CD8-positive, alpha-beta T cell (primary cell): ENCODE measurements at regions of chr2 and their contacts with region 1.

Region 1: GRCh38 chr2:24971536-24972314 is at the start of gene DNAJC27:
- DNase-seq: peak; percentile 92 to 99 (median 98)
- ATAC-seq: peak; percentile 87
- H3K4me3 ChIP-seq: peak within 1 kb of the TSS; percentile 68 to 98
- H3K4me3 Mint-ChIP-seq: peak within 1 kb of the TSS; percentile 96
- H3K27ac ChIP-seq: peak within 1 kb of the TSS; percentile 93 to 100
- H3K27ac Mint-ChIP-seq: peak within 1 kb of the TSS; percentile 100
- H3K4me1 ChIP-seq: peaks cover 17% of the 10 kb centered on the region
- H3K4me1 Mint-ChIP-seq: peaks cover 27% of the 10 kb centered on the region
- H3K27me3 ChIP-seq: no peaks in the 10 kb centered on the region
- H3K27me3 Mint-ChIP-seq: no peaks in the 10 kb centered on the region
- CTCF ChIP-seq: no peak
- total RNA-seq, gene DNAJC27: 18.9 to 19.1 TPM

Region 2: GRCh38 chr2:23926750-23927571 is 1044.8 kb before region 1 on chr2 and contains the start of gene ATAD2B:
- CTCF ChIA-PET with region 1: no interaction called
- POLR2A ChIA-PET with region 1: no interaction called
- intact Hi-C with region 1: loop called in 1 of 2 experiments (anchors 5 kb)
- DNase-seq: peak; percentile 86 to 98 (median 92)
- ATAC-seq: peak; percentile 82
- H3K4me3 ChIP-seq: peak within 1 kb of the TSS; percentile 84 to 95
- H3K4me3 Mint-ChIP-seq: peak within 1 kb of the TSS; percentile 99
- H3K27ac ChIP-seq: peak within 1 kb of the TSS; percentile 95 to 99
- H3K27ac Mint-ChIP-seq: peak within 1 kb of the TSS; percentile 100
- H3K4me1 ChIP-seq: peaks cover 33% of the 10 kb centered on the region
- H3K4me1 Mint-ChIP-seq: peaks cover 52% of the 10 kb centered on the region
- H3K27me3 ChIP-seq: no peaks in the 10 kb centered on the region
- H3K27me3 Mint-ChIP-seq: no peaks in the 10 kb centered on the region
- CTCF ChIP-seq: peak; percentile 52
- total RNA-seq, gene ATAD2B: 32.0 to 32.4 TPM

Region 3: DNA sequence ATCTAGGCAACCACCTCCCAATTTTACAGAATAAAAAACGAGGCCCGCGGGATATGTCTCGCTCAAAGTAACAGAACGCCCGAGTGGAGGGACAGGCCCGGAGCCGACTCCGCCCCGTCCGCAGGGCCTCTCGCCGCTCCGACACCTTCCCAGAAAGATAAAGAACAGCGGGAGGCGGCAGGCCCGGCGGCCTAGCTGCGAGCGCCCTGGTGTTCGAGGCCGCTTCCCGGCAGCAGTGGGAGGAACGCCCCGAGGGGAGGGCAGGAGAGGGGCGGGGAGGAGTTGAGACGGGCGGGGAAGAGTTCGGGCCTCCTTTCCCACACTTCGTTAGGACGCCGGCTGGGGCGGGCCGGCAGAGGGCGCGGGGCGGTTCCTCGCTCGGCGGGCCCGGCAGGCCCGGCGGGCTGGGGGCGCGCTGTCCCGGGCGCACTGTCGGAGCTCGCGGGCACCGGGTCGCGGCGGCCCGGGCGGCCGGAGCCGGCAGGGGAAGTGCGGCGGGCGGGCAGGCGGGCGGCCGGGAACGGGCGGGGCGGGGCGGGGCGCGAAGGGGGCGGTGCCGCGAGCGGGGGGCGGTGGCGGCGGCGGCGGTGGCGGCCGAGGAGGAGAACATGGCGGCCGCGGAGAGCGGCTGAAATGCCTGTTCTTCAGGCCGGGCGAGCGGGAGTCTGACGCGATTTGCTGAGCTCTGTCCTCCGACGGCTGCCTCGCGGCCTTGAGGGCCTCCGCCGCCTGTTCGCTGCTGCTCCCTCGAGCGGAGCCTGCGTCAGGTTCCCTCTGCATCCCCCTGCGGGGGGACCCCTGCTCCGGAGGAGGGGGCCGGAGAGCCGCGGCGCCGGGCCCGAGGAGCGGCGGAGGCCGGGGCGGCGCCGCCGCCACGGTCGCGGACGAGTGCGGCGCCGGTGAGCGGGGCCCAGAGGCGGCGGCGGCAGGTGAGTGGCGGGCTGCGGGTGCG is 480.8 kb before region 1 on chr2 and contains the start of gene NCOA1:
- CTCF ChIA-PET with region 1: no interaction called
- POLR2A ChIA-PET with region 1: no interaction called
- intact Hi-C with region 1: loop called (anchors 5 kb)
- DNase-seq: peak; percentile 77 to 94 (median 89)
- ATAC-seq: peak; percentile 85
- H3K4me3 ChIP-seq: peak within 1 kb of the TSS; percentile 63 to 72
- H3K4me3 Mint-ChIP-seq: peak within 1 kb of the TSS; percentile 89
- H3K27ac ChIP-seq: peak within 1 kb of the TSS; percentile 70 to 93
- H3K27ac Mint-ChIP-seq: peak within 1 kb of the TSS; percentile 94
- H3K4me1 ChIP-seq: peaks cover 37% of the 10 kb centered on the region
- H3K4me1 Mint-ChIP-seq: peaks cover 53% of the 10 kb centered on the region
- H3K27me3 ChIP-seq: no peaks in the 10 kb centered on the region
- H3K27me3 Mint-ChIP-seq: no peaks in the 10 kb centered on the region
- CTCF ChIP-seq: no peak
- total RNA-seq, gene NCOA1: 32.6 to 33.5 TPM

Region 4: GRCh38 chr2:25000503-25001324 is 29.0 kb after region 1 on chr2:
- CTCF ChIA-PET with region 1: no interaction called
- POLR2A ChIA-PET with region 1: no interaction called
- intact Hi-C with region 1: no loop called
- DNase-seq: no peak
- ATAC-seq: no peak
- H3K4me3 ChIP-seq: no peak overlapping the region
- H3K4me3 Mint-ChIP-seq: no peak overlapping the region
- H3K27ac ChIP-seq: no peak overlapping the region
- H3K27ac Mint-ChIP-seq: no peak overlapping the region
- H3K4me1 ChIP-seq: no peaks in the 10 kb centered on the region
- H3K4me1 Mint-ChIP-seq: no peaks in the 10 kb centered on the region
- H3K27me3 ChIP-seq: no peaks in the 10 kb centered on the region
- H3K27me3 Mint-ChIP-seq: peaks cover 8% of the 10 kb centered on the region
- CTCF ChIP-seq: no peak

Region 5: DNA sequence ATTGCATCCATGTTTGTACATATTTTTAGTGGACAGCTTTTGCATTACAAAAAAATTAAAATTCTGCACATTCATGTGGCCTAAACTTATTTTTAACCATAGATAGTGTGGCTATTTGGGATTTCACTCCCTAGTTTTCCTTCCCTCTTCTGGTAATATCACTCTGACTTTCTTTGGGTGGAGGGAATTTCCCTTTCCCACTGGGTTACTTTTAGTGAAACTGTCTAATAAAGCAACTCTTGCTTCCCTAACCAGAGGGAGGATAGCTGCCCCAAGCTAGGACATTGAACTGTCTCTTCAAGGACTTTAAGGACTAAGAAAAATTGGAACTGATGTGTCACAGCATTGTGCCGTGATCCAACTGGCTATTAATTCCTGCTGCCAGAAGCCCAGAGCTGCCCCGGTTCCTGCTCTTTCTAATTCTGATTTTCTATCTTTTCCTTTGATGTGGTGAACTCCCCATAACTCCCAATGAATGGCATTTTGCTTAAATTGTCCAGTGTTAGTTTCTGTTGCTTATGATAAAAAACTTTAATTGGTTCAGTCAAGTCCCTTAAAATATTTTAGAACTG is 50.2 kb after region 1 on chr2:
- CTCF ChIA-PET with region 1: no interaction called
- POLR2A ChIA-PET with region 1: no interaction called
- intact Hi-C with region 1: no loop called
- DNase-seq: no peak
- ATAC-seq: no peak
- H3K4me3 ChIP-seq: no peak overlapping the region
- H3K4me3 Mint-ChIP-seq: no peak overlapping the region
- H3K27ac ChIP-seq: no peak overlapping the region
- H3K27ac Mint-ChIP-seq: no peak overlapping the region
- H3K4me1 ChIP-seq: no peaks in the 10 kb centered on the region
- H3K4me1 Mint-ChIP-seq: no peaks in the 10 kb centered on the region
- H3K27me3 ChIP-seq: peaks cover 0 to 3% of the 10 kb centered on the region in 2 experiments
- H3K27me3 Mint-ChIP-seq: peaks cover 8% of the 10 kb centered on the region
- CTCF ChIP-seq: no peak

Region 6: GRCh38 chr2:25123682-25124081 is 152.0 kb after region 1 on chr2:
- CTCF ChIA-PET with region 1: interaction called, 38 read pairs
- POLR2A ChIA-PET with region 1: interaction called, 4 read pairs
- intact Hi-C with region 1: no loop called
- DNase-seq: no peak
- ATAC-seq: no peak
- H3K4me3 ChIP-seq: no peak overlapping the region
- H3K4me3 Mint-ChIP-seq: no peak overlapping the region
- H3K27ac ChIP-seq: no peak overlapping the region
- H3K27ac Mint-ChIP-seq: no peak overlapping the region
- H3K4me1 ChIP-seq: no peaks in the 10 kb centered on the region
- H3K4me1 Mint-ChIP-seq: no peaks in the 10 kb centered on the region
- H3K27me3 ChIP-seq: no peaks in the 10 kb centered on the region
- H3K27me3 Mint-ChIP-seq: peaks cover 14% of the 10 kb centered on the region
- CTCF ChIP-seq: no peak

Region 7: DNA sequence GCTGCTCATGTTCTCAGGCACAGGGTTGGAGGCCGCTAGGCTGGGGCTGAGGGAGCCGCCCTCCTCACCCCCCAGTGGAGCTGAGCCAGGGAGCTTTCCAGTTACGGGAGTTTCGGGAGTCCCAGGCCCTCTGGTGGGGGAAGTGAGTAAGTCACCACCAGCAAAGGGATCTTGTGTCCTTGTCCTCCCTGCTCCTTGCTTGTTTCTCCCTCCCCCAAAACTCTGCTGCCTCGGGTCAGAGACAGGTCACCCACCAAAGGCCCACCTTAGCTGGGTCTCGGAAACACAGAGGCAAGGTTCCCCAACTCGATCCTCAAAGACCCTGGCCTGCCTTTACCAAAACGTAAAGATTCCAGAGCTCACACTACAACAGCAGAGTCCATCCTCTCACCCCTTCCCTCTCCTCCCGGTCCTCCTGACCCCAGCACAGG is 257.1 kb after region 1 on chr2:
- CTCF ChIA-PET with region 1: no interaction called
- POLR2A ChIA-PET with region 1: no interaction called
- intact Hi-C with region 1: no loop called
- DNase-seq: peak in 6 of 9 experiments; percentile 20 to 74 (median 46)
- ATAC-seq: peak; percentile 75
- H3K4me3 ChIP-seq: no peak overlapping the region
- H3K4me3 Mint-ChIP-seq: no peak overlapping the region
- H3K27ac ChIP-seq: no peak overlapping the region
- H3K27ac Mint-ChIP-seq: no peak overlapping the region
- H3K4me1 ChIP-seq: no peaks in the 10 kb centered on the region
- H3K4me1 Mint-ChIP-seq: peaks cover 12% of the 10 kb centered on the region
- H3K27me3 ChIP-seq: no peaks in the 10 kb centered on the region
- H3K27me3 Mint-ChIP-seq: no peaks in the 10 kb centered on the region
- CTCF ChIP-seq: no peak

Region 8: DNA sequence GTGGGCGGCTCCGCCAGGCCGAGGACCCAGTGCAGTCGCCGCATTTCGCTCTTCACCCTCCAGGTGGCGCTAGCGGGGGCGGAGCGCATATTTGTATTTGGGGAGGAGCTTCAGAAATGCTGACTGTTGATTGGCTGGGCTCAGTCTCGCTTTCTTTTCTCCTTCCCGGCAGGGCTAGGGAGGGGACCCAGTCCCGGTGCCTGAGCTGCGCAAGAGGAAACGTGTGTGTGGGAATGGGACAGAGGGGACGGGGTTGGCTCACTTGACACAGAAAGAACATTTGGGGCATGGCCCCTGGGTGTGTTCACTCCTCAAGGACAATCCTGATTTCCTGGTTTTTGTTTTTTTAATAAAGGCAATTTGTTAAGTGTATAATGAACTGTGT is 390.3 kb after region 1 on chr2:
- CTCF ChIA-PET with region 1: no interaction called
- POLR2A ChIA-PET with region 1: no interaction called
- intact Hi-C with region 1: loop called in 1 of 2 experiments (anchors 5 kb)
- DNase-seq: peak; percentile 87 to 99 (median 94)
- ATAC-seq: peak; percentile 94
- H3K4me3 ChIP-seq: peak overlapping the region; percentile 65 to 73
- H3K4me3 Mint-ChIP-seq: peak overlapping the region; percentile 89
- H3K27ac ChIP-seq: peak overlapping the region; percentile 49 to 84
- H3K27ac Mint-ChIP-seq: peak overlapping the region; percentile 94
- H3K4me1 ChIP-seq: peaks cover 15% of the 10 kb centered on the region
- H3K4me1 Mint-ChIP-seq: peaks cover 20% of the 10 kb centered on the region
- H3K27me3 ChIP-seq: no peaks in the 10 kb centered on the region
- H3K27me3 Mint-ChIP-seq: no peaks in the 10 kb centered on the region
- CTCF ChIP-seq: peak; percentile 94

Region 9: DNA sequence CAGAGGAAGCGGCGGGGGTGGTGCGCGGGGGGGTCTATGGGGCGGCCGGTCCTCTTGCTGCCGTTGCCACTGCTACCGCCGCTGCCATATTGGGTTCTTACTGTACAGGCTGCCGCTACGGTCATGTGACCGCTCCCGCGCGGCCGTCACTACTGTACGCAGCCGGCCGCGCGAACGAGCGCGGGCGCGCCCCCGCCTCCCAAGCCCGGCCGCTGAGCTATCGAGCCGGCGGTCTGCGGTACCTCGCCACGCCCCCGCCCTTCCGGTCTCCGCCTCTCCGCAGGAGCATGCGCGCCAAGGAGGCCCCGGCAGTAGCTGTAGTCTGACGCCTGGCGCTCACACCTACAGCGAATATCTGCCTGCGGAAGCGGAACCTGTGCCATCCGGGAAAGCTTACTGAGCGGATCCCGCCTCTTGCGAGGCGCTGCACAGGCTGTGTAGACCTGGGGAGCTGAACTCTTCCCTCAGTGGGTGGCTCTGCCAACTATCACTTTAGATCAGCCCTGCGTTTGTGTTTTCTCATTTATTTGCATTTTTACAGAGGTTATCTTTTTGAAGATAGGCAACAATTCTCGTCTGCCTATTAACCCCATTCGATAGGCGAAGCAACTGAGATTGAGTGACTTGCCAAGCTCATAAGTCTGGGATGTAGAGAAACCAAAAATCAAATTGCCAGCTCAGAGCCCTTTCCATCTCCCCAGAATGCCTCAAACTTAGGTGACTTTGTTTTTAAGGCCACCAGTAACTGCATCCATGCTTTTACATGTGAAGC is 906.8 kb after region 1 on chr2 and contains the start of gene ASXL2:
- CTCF ChIA-PET with region 1: no interaction called
- POLR2A ChIA-PET with region 1: no interaction called
- intact Hi-C with region 1: loop called (anchors 5 to 10 kb)
- DNase-seq: peak; percentile 93 to 100 (median 97)
- ATAC-seq: peak; percentile 85
- H3K4me3 ChIP-seq: peak within 1 kb of the TSS; percentile 74 to 93
- H3K4me3 Mint-ChIP-seq: peak within 1 kb of the TSS; percentile 92
- H3K27ac ChIP-seq: peak within 1 kb of the TSS; percentile 95 to 96
- H3K27ac Mint-ChIP-seq: peak within 1 kb of the TSS; percentile 99
- H3K4me1 ChIP-seq: peaks cover 25% of the 10 kb centered on the region
- H3K4me1 Mint-ChIP-seq: peaks cover 34% of the 10 kb centered on the region
- H3K27me3 ChIP-seq: no peaks in the 10 kb centered on the region
- H3K27me3 Mint-ChIP-seq: no peaks in the 10 kb centered on the region
- CTCF ChIP-seq: no peak
- total RNA-seq, gene ASXL2: 7.5 to 10.7 TPM